Activated T-helper 2 cell treated with anti-CD3 and anti-CD28 coated beads, Interferon-gamma antibody, Interleukin-2, Interleukin-4, amounts not matched to agents 10 μg/mL and 5 μg/mL and 100 μg/mL, durations not matched to agents 14 hours and 24 hours and 36 hours (primary cell): ENCODE measurements at regions of chr4 and their contacts with region 1.

Region 1: GRCh38 chr4:73446336-73446938 is 10.4 kb downstream of the AFP start:
- DNase-seq: no peak
- H3K4me3 Mint-ChIP-seq: no peak overlapping the region
- H3K27ac Mint-ChIP-seq: no peak overlapping the region
- H3K4me1 Mint-ChIP-seq: no peaks in the 10 kb centered on the region
- H3K27me3 Mint-ChIP-seq: peaks cover 4% of the 10 kb centered on the region

Region 2: DNA sequence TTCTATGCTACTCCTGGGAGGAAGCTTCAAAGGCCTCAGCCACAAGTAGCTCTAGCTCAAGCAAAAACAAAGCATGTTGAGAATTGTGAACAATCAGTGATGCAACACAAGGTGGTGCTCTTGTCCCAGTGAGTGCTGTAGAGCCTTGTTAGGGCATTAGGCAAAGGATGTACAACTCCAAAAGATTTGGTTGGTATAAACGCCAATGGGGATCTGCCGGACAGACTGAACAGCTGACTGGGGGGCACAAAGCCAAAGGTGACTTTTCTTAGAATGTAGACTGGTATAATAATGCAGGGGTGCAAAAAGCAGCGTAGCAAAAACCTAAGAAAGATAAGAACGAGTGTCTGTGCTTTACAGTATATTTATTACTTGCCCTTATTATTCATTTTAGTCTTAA is 105.0 kb before region 1 on chr4:
- intact Hi-C with region 1: loop called (anchors 1 kb)
- DNase-seq: no peak
- H3K4me3 Mint-ChIP-seq: no peak overlapping the region
- H3K27ac Mint-ChIP-seq: no peak overlapping the region
- H3K4me1 Mint-ChIP-seq: no peaks in the 10 kb centered on the region
- H3K27me3 Mint-ChIP-seq: no peaks in the 10 kb centered on the region

Region 3: DNA sequence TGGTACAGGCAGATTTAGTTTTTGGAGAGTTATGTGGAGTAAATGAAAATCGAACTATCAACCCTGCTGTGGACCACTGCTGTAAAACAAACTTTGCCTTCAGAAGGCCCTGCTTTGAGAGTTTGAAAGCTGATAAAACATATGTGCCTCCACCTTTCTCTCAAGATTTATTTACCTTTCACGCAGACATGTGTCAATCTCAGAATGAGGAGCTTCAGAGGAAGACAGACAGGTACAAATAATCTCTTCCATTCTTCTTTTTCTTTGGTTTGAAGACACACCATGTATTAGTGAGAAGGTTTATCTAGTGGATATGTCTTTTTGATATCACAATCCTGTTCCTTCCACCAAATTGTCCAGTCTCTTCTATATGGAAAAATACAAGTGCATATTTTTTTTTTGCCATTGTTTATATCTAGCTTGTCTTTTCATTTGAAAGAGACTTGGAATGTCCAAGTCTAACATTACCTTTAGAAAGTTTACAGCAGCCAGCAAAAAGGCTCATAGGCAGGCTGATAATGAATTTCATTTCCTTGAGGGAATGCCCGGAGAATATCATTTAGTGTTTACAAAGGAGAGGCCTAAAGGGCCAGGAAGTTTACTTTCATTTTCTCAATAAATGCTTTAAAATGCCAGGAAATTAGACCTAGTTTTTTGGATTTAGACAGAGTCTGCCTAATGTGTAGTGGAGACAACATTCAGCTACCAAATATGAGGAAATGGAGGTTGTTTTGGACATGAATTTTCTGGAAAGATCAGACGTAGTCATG is 53.7 kb after region 1 on chr4:
- intact Hi-C with region 1: no loop called
- DNase-seq: no peak
- H3K4me3 Mint-ChIP-seq: no peak overlapping the region
- H3K27ac Mint-ChIP-seq: no peak overlapping the region
- H3K4me1 Mint-ChIP-seq: peaks cover 3% of the 10 kb centered on the region
- H3K27me3 Mint-ChIP-seq: no peaks in the 10 kb centered on the region